ENCODE measurements at regions of chr14 and their contacts with region 1.

Region 1: GRCh38 chr14:75307700-75308379 is 29.2 kb downstream of the FOS start:
- DNase-seq: peak; percentile 84 to 88
- H3K4me3 ChIP-seq: no peak overlapping the region
- H3K27ac ChIP-seq: no peak overlapping the region
- H3K4me1 ChIP-seq: peaks cover 4 to 21% (median 13%) of the 10 kb centered on the region in 4 donors
- H3K27me3 ChIP-seq: no peaks in the 10 kb centered on the region
- CTCF ChIP-seq: peak; percentile 84 to 93

Region 2: DNA sequence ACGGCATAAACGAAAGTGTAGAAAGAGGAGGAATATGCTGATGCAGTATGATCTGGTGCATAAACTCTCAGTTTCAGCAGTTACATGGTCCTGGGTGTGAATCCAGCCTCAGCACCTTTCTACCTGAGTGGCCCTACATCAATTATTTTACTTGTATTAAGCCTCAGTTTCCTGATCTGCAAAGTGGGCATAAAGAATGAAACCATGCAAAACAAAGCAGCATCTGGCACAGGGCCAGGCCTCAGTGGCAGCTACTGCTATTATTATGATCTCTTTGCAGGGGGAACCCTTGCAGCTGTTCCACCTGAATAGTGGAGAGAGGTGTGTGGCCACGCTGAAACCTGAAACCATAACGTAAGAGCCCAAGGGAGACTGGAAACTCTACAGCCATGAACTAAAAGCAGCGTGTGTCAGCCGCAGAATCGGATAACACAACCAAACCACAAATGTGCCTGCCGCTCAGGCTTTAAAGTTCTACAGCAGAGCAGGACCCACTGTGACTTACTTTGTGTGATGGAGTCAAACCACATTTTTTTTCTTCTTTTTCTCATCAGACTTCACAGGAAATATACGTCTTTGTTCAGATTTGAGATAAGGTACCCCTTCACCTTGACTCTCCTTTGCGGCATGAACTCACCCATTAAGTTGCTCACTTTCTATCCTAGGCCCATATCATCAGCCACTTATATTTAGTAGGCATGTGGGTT is 58.4 kb before region 1 on chr14:
- intact Hi-C with region 1: no loop called
- DNase-seq: peak in 1 of 2 donors; percentile 50
- H3K4me3 ChIP-seq: no peak overlapping the region
- H3K27ac ChIP-seq: no peak overlapping the region
- H3K4me1 ChIP-seq: peaks cover 0 to 6% (median 5%) of the 10 kb centered on the region in 4 donors
- H3K27me3 ChIP-seq: no peaks in the 10 kb centered on the region
- CTCF ChIP-seq: no peak

Region 3: DNA sequence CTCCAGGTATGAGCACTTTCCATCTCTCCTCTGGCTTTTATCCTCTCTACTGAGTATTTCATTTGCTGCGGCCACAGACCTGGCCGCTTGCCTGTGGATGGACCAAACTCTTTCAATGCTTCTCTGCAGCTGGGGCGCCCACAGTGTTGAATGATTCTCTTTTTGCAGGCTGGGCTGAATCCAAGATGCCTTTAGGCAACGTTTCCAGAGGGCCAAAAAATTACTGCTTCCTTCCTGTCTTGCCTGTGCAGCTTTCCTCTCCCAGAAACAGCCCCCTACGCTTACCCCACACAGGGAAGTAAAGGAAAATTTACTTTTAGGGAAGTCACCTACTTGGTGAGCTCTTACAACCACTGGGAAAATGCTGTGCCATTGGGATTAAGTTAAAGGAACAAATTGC is 64.4 kb after region 1 on chr14:
- intact Hi-C with region 1: no loop called
- DNase-seq: peak in 1 of 2 donors; percentile 51
- H3K4me3 ChIP-seq: no peak overlapping the region
- H3K27ac ChIP-seq: no peak overlapping the region
- H3K4me1 ChIP-seq: no peaks in the 10 kb centered on the region
- H3K27me3 ChIP-seq: peaks cover 0 to 2% of the 10 kb centered on the region in 2 donors
- CTCF ChIP-seq: no peak

Region 4: DNA sequence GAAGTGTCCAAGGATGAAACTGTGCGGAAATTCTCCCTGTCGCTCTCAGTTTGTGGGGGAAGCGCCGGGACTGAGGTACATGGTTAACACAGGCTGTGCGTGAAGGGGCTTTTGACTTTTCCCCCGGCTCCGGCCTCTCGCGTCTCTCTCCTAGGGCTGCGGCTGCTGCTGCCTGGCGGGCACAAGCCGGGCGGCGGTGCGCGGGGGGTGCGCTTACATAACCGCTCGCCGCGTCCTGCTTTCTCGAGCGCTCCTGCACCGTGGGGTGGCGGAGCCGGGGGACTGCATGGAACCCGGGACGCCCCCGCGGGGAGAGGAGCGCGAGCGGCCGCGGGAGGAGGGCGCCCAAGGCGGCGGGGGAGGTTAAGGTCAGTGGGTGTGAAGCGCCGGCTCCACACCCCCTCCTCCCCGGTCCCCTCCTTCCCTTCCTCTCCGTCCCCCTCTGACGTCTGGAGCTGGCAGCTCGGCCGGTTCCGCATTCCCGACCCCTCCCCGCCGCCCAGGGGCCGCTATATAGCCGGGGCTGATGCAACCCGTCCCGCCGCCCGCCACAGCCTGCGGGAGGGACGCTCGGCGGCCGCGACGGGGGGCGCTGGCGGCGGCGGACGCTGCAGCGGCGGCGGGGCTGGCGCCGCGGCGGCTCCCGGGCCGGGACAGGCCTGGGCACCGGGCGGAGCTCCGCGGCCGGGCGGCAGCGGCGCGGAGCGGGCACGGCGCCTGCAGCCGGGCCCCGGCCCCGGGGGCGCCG is 119.8 kb after region 1 on chr14 and contains the start of gene JDP2:
- intact Hi-C with region 1: loop called (anchors 5 kb)
- DNase-seq: peak; percentile 93 to 95
- H3K4me3 ChIP-seq: peak within 1 kb of the TSS; percentile 63 to 70
- H3K27ac ChIP-seq: peak within 1 kb of the TSS; percentile 73 to 83
- H3K4me1 ChIP-seq: peaks cover 0 to 42% (median 34%) of the 10 kb centered on the region in 4 donors
- H3K27me3 ChIP-seq: no peaks in the 10 kb centered on the region
- CTCF ChIP-seq: peak in 1 of 2 experiments; percentile 52

Region 5: DNA sequence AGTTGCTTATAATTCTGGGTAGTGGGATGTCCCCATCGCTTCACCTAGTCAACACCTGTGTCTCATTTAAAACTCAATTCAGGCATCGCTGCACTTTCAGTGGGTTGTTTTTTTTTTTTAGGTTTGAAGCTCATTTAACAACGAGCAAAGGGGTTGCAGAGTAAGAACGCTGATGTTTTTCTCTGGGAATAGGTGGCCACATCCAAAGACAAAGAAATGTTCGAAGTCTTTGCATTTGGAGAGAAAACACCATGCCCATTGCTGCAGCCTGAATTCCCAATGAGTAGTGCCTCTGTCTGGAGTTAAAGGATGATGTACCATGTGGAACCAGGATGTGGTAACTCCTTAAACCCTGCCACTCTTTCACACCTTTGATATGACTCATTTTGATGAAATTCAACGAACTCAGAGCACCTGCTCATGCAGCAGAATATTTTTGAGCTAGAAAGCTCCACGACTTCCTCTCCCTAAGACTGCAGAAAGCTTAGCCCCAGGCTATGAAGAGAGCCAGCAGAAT is 179.4 kb after region 1 on chr14:
- intact Hi-C with region 1: loop called (anchors 2 kb)
- DNase-seq: no peak
- H3K4me3 ChIP-seq: no peak overlapping the region
- H3K27ac ChIP-seq: no peak overlapping the region
- H3K4me1 ChIP-seq: no peaks in the 10 kb centered on the region
- H3K27me3 ChIP-seq: peaks cover 0 to 8% of the 10 kb centered on the region in 2 donors
- CTCF ChIP-seq: no peak